A673 (cell line): ENCODE measurements at regions of chr7 and their contacts with region 1.

Region 1: GRCh38 chr7:18305866-18306265 is 189.7 kb upstream of the HDAC9 start:
- DNase-seq: no peak
- H3K4me3 ChIP-seq: no peak overlapping the region
- H3K27ac ChIP-seq: no peak overlapping the region
- H3K4me1 ChIP-seq: no peaks in the 10 kb centered on the region
- H3K27me3 ChIP-seq: no peaks in the 10 kb centered on the region
- CTCF ChIP-seq: no peak

Region 2: DNA sequence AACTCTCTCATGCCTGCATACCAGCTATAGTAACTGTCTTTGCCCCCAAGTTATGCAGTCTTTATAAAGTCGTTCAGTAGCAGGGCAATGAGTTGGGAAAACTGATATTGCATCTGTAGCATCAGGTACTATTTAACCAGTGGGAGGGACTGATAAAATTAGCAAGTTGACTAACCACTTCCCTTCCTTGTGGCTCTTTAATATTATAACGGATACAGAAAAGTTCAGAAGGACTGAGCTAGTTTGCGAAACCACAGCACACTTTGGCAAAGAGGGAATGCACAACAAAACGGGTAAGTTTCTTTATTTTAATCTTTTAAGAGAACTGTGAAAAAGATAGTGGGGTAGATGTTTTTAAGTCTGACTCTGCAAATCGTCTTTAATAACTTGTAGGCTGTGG is 15.6 kb before region 1 on chr7:
- CTCF ChIA-PET with region 1: no interaction called
- POLR2A ChIA-PET with region 1: no interaction called
- intact Hi-C with region 1: no loop called
- DNase-seq: no peak
- H3K4me3 ChIP-seq: no peak overlapping the region
- H3K27ac ChIP-seq: no peak overlapping the region
- H3K4me1 ChIP-seq: peaks cover 16% of the 10 kb centered on the region
- H3K27me3 ChIP-seq: no peaks in the 10 kb centered on the region
- CTCF ChIP-seq: no peak

Region 3: DNA sequence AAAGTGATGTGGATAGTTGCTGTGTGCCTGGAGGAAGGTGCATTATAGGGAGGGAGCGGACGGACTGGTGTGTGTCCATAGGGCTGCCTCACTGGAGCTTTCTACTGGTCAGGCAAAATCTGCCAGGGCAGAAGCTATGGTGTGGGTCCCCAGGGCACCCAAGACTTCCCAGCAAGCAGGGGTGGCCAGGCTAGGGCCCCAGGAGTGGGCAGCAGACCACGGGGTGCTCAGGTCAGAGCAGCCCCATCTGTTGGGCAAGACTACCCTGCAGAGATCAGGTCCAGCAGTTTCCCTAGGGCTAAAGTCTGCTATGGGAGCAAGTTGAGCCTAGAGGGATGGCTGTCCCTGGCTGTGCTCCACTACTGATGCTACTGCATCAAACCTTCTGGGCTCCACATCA is 1289.9 kb after region 1 on chr7:
- CTCF ChIA-PET with region 1: no interaction called
- POLR2A ChIA-PET with region 1: interaction called, 14 read pairs
- intact Hi-C with region 1: no loop called
- DNase-seq: no peak
- H3K4me3 ChIP-seq: no peak overlapping the region
- H3K27ac ChIP-seq: no peak overlapping the region
- H3K4me1 ChIP-seq: no peaks in the 10 kb centered on the region
- H3K27me3 ChIP-seq: no peaks in the 10 kb centered on the region
- CTCF ChIP-seq: no peak